Panc1 (cell line): ENCODE measurements at regions of chr20 and their contacts with region 1.

Region 1: GRCh38 chr20:47196091-47197081 is 160.1 kb downstream of the ZMYND8 start:
- DNase-seq: no peak
- ATAC-seq: peak; percentile 90
- H3K4me3 ChIP-seq: peak overlapping the region in 1 of 2 experiments; percentile 17; a peak in 1 of 4 replicates
- H3K27ac ChIP-seq: peak overlapping the region; percentile 69; the same call in 1 of the 2 replicates
- H3K4me1 ChIP-seq: no peaks in the 10 kb centered on the region
- H3K27me3 ChIP-seq: no peaks in the 10 kb centered on the region
- CTCF ChIP-seq: peak; percentile 98

Region 2: GRCh38 chr20:47635256-47635655 is 438.9 kb after region 1 on chr20:
- CTCF ChIA-PET with region 1: interaction called, 15 read pairs
- POLR2A ChIA-PET with region 1: no interaction called
- in situ Hi-C with region 1: no loop called
- intact Hi-C with region 1: no loop called
- DNase-seq: no peak
- ATAC-seq: no peak
- H3K4me3 ChIP-seq: no peak overlapping the region
- H3K27ac ChIP-seq: no peak overlapping the region
- H3K4me1 ChIP-seq: no peaks in the 10 kb centered on the region
- H3K27me3 ChIP-seq: no peaks in the 10 kb centered on the region
- CTCF ChIP-seq: no peak